ENCODE measurements at regions of chr2 and their contacts with region 1.

Region 1: DNA sequence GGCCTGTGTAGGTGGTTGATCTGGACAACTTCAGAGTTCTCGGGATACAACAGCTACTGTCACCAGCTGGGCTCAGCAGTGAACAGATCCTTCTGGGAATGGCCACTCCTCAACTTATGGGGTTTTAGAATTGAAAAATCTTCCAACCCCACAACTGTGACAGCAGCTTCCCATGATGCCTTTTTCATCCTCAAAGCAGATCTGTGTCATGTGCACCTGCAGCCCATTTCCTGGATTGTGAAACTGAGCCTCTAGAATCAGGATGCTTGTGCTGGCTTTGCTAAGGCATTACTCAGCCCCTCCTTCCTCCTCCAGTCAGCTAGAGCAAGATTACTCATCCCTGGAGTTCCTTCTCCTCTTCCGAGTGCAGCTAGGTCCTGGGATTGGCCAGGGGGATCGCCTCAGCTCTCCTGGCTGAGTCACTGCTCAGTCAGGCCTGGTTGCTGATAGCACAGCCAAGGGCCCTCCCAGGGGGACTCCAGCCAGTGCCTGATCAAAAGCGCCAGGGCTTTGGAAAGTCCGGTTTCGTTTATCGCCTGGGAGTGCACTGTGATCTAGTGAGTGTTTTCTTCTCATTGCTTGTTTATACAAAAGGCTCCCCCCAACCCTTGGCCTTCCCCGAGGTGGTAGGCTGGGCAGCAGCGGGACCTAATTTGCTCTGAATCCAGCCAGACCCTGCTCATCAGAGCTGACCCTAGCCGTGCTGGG is 2.4 kb upstream of the LPIN1 start:
- DNase-seq: peak; percentile 98
- ATAC-seq: peak; percentile 82
- H3K4me3 ChIP-seq: peak overlapping the region; percentile 49 to 60
- H3K27ac ChIP-seq: peak overlapping the region; percentile 69
- H3K4me1 ChIP-seq: peaks cover 50 to 64% of the 10 kb centered on the region in 2 experiments
- H3K27me3 ChIP-seq: no peaks in the 10 kb centered on the region
- CTCF ChIP-seq: no peak
- POLR2A ChIP-seq: no peak
- RAD21 ChIP-seq: no peak

Region 2: DNA sequence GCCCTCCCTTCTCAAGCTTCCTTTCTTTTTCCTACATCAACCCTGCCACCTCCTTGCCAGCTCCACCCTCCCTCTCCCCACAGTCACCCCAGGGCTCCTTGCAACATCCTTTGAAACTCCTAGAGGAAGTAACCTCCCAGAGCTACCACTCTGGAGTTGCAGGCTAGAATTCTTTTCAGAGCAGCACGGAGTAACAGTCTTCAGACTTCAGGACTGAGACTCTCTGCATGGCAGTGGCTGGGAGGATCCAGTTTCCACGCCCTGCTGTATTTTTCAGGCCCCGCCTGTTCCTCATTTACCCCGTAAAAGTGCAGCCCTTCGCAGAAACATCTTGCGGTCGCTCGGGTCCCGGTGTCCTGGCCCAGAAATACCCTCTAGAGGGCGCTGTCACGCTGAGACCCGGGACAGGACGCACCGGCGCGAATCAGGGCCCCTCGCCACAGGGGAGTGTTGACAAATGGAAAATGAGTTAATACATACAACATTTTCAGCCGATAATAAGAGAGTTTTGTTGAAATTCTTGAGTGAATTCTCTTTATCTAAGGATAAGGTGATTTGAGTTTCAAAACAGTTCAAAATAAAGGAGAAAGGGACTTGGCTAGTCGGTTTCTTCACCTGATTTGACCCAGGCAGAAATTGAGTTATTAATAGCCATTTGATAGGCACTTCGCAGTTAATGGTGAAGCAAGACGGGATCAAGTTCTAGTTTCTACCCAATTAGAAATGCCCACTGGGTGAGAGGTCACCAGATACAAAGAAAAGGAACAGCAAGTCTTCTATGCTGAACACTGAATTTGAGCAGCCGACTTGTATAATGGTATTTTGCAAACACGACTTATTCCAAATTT is 55.6 kb before region 1 on chr2:
- CTCF ChIA-PET with region 1: interaction called, 20 read pairs
- POLR2A ChIA-PET with region 1: no interaction called
- RAD21 ChIA-PET with region 1: interaction called in 1 of 2 experiments, 3 read pairs
- intact Hi-C with region 1: no loop called
- DNase-seq: peak; percentile 61
- ATAC-seq: peak; percentile 89
- H3K4me3 ChIP-seq: peak overlapping the region; percentile 15 to 42; a peak in 3 of 4 replicates
- H3K27ac ChIP-seq: no peak overlapping the region
- H3K4me1 ChIP-seq: peaks cover 8 to 20% of the 10 kb centered on the region in 2 experiments; a peak in 3 of 4 replicates
- H3K27me3 ChIP-seq: no peaks in the 10 kb centered on the region
- CTCF ChIP-seq: peak; percentile 85 to 97 (median 88)
- POLR2A ChIP-seq: no peak
- RAD21 ChIP-seq: peak; percentile 87

Region 3: DNA sequence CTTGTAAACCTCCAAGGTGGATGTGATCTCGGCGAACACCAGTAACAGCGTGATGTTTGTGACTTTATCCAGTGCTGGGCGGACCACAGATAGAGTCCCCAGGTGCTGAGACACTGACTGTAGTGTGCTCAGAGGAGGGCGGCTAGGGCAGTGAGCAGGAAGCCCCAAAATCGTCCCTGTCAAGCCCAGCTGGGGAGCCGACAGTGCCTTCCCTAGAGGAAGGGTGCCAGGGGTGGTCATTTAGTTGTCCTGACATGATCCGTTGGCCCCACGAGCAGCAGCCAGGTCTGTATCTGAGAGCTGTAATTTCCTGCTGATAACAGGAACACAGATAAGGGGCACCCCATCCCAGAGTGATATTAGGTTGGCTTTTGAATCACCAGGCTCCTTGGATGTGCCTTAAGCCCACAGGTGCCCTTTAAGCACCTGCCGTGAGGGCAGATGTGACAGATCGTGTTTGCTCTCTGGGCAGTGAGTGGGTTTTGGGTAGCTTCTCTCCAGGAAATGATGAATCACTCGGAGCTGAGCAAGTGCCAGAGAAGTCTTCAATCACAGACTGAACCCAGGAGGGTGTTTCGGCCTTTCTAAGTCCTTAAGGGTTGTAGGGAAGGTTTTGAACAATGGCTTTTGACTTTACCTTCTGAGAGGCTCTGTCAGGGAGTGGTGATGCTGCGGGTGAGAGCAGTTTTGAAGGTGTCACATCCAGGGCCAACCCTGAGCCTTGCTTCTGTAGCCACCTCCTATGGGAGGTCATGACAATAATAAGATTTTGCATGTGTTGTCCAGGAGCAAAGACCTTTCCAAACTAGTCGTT is 10.1 kb after region 1 on chr2:
- CTCF ChIA-PET with region 1: interaction called, 11 read pairs
- POLR2A ChIA-PET with region 1: interaction called, 3 read pairs
- RAD21 ChIA-PET with region 1: interaction called in 1 of 2 experiments, 3 read pairs
- intact Hi-C with region 1: no loop called
- DNase-seq: no peak
- ATAC-seq: peak; percentile 78
- H3K4me3 ChIP-seq: peak overlapping the region in 1 of 2 experiments; percentile 23; a peak in 1 of 4 replicates
- H3K27ac ChIP-seq: 0 out of 2 replicates have a peak overlapping the region, but pooled peaks have one; percentile 21
- H3K4me1 ChIP-seq: peaks cover 32 to 41% of the 10 kb centered on the region in 2 experiments
- H3K27me3 ChIP-seq: no peaks in the 10 kb centered on the region
- CTCF ChIP-seq: no peak
- POLR2A ChIP-seq: no peak
- RAD21 ChIP-seq: no peak

Measured in HCT116 (cell line).